ENCODE measurements at regions of chr13 and their contacts with region 1.

Region 1: GRCh38 chr13:25375727-25376358 is 4.1 kb downstream of the ATP8A2 start:
- DNase-seq: peak; percentile 43
- H3K4me3 Mint-ChIP-seq: no peak overlapping the region
- H3K27ac Mint-ChIP-seq: no peak overlapping the region
- H3K4me1 Mint-ChIP-seq: peaks cover 7% of the 10 kb centered on the region
- H3K27me3 Mint-ChIP-seq: peaks cover 65% of the 10 kb centered on the region

Region 2: GRCh38 chr13:25232937-25233515 is 142.8 kb before region 1 on chr13:
- CTCF ChIA-PET with region 1: interaction called, 24 read pairs
- DNase-seq: no peak
- H3K4me3 Mint-ChIP-seq: no peak overlapping the region
- H3K27ac Mint-ChIP-seq: no peak overlapping the region
- H3K4me1 Mint-ChIP-seq: no peaks in the 10 kb centered on the region
- H3K27me3 Mint-ChIP-seq: peaks cover 6% of the 10 kb centered on the region